Activated T-helper 1 cell treated with anti-CD3 and anti-CD28 coated beads, Interleukin-12 subunit alpha, Interleukin-12 subunit beta, Interleukin-2, Interleukin-4 antibody, amounts not matched to agents 30 ng/mL and 10 ng/mL and 1 ng/mL, durations not matched to agents 14 hours and 24 hours and 36 hours (primary cell): ENCODE measurements at regions of chr4 and their contacts with region 1.

Region 1: DNA sequence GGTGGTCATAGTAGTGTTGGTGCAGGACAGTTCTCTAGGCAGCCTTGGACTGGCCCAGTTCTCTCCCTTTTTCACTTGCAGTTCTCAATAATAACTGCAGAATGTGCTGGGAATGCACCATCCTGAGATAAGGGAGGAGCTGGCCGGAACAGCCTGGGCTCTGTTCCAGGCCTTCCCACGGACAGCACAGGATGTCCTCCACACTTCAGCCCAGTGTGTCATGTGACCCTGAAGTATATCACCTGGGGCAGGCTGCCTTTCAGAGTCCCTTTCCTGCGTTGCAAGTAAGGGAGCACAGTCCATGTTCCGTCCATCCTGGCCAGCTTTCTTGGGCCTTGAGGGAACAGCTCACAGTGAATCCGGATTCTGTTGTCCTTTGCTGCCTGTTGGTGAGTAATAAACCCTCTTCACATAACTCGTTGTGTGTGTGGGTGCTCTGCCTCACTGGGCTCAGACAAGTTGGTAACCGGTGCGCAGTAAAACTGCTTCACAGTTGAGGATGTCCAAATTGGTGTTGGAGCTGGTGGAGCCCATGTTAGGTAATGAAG is 32.3 kb upstream of the BBS12 start:
- DNase-seq: no peak
- H3K4me3 Mint-ChIP-seq: peak overlapping the region; percentile 81
- H3K27ac Mint-ChIP-seq: peak overlapping the region; percentile 95
- H3K4me1 Mint-ChIP-seq: peaks cover 70% of the 10 kb centered on the region
- H3K27me3 Mint-ChIP-seq: peaks cover 2% of the 10 kb centered on the region

Region 2: DNA sequence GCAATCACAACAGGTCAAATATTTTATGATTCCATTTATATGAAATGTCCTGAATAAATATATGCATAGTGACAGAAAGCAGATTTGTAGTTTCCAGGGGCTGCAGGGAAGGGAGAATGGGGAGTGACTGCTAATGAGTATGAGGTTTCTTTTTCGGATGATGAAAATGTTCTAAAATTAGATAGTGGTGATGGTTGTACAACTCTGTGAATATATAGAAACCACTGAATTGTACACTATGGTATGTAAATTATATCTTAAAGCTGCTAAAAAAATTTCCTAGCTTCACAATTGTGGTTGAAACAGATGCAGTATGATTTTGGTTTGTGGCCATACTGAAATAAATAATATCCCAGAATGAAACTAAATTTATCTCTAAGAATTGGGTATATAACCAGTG is 230.8 kb before region 1 on chr4:
- intact Hi-C with region 1: no loop called
- DNase-seq: no peak
- H3K4me3 Mint-ChIP-seq: no peak overlapping the region
- H3K27ac Mint-ChIP-seq: no peak overlapping the region
- H3K4me1 Mint-ChIP-seq: no peaks in the 10 kb centered on the region
- H3K27me3 Mint-ChIP-seq: no peaks in the 10 kb centered on the region

Region 3: DNA sequence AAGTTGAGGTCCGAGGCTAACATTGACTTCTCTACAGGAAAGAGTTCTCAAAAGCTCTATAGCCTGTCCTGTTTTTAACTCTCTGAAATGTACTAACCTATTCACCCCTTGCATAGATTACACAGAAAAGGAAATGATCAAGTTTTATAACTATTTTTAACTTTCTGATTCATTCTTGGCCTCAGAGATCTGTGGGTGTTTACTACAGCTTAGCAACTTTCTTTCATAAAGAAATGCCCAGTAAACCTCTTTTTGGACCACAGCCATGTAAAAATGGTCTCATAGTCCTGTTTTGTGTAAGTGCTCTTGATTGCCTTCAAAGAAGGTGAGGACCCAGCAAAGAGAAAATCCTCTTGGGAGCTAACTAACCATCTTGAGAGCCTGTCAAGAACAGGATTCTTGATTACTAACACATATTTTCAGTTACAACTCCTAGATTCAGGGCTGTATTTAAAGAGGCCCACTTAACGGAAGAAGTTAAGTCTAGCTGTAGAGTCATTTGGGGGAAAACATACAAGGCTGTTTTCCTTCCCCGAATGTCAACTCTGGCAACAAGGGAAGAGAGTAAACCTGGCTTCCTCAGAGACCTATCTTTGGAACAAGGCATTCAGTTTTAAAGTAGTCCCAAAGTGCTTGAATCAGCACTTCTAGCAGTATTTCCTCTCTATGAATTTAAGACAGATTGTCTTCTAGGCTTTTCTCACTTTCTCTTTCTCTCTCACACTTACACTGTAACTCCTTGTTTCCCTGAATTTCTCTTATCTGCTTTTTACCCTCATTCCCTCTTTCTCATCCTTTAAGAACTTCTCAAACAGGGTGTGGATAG is 157.6 kb before region 1 on chr4:
- intact Hi-C with region 1: loop called (anchors 1 kb)
- DNase-seq: no peak
- H3K4me3 Mint-ChIP-seq: peak overlapping the region; percentile 71
- H3K27ac Mint-ChIP-seq: peak overlapping the region; percentile 93
- H3K4me1 Mint-ChIP-seq: peaks cover 85% of the 10 kb centered on the region
- H3K27me3 Mint-ChIP-seq: no peaks in the 10 kb centered on the region

Region 4: GRCh38 chr4:122658818-122659295 is 41.4 kb before region 1 on chr4:
- intact Hi-C with region 1: loop called (anchors 1 kb)
- DNase-seq: no peak
- H3K4me3 Mint-ChIP-seq: peak overlapping the region; percentile 66
- H3K27ac Mint-ChIP-seq: peak overlapping the region; percentile 94
- H3K4me1 Mint-ChIP-seq: peaks cover 59% of the 10 kb centered on the region
- H3K27me3 Mint-ChIP-seq: no peaks in the 10 kb centered on the region

Region 5: DNA sequence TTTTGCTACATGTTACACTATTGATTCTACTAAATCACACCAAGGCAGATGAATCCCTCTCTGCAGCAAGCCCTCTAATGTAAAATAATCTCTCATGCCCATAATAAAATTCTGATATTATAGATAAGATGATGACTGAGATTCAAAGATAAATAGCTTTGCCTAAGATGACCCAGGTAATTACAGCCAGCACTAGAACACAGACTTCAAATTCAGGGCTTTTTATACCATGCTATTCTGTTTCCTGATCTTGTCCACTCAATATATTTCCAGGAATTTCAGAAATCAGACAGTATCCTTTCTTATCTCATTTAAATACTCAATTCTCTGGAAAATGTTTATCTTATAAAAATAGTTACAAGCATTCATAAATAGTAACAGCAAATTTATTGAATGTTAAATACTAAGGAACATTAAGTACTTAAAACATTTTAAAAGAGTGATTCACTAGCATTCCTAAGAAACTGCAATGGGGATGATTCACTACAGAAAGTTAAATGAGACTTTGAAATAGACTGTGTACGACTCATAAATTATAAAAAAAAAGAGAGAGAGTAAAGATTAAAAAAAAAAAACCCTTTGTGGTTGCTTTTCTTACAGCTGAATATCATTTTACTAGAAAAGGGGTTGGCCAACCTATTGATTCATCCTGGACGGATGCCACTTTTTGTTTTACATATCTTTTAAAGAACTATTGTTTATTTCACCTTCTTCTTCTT is 33.6 kb before region 1 on chr4:
- intact Hi-C with region 1: loop called (anchors 1 kb)
- DNase-seq: no peak
- H3K4me3 Mint-ChIP-seq: peak overlapping the region; percentile 69
- H3K27ac Mint-ChIP-seq: peak overlapping the region; percentile 74
- H3K4me1 Mint-ChIP-seq: peaks cover 88% of the 10 kb centered on the region
- H3K27me3 Mint-ChIP-seq: no peaks in the 10 kb centered on the region

Region 6: GRCh38 chr4:122689972-122690371 is 10.3 kb before region 1 on chr4:
- intact Hi-C with region 1: loop called (anchors 1 kb)
- DNase-seq: peak; percentile 22
- H3K4me3 Mint-ChIP-seq: peak overlapping the region; percentile 43
- H3K27ac Mint-ChIP-seq: peak overlapping the region; percentile 71
- H3K4me1 Mint-ChIP-seq: peaks cover 66% of the 10 kb centered on the region
- H3K27me3 Mint-ChIP-seq: no peaks in the 10 kb centered on the region